Natural killer cell (primary cell): ENCODE measurements at regions of chr12 and their contacts with region 1.

Region 1: GRCh38 chr12:120437754-120438494 is at the start of gene COX6A1:
- DNase-seq: peak; percentile 83 to 100
- ATAC-seq: peak; percentile 87 to 94 (median 91)
- H3K4me3 ChIP-seq: peak within 1 kb of the TSS; percentile 73
- H3K4me3 Mint-ChIP-seq: peak within 1 kb of the TSS; percentile 98
- H3K27ac ChIP-seq: peak within 1 kb of the TSS; percentile 78
- H3K27ac Mint-ChIP-seq: peak within 1 kb of the TSS; percentile 91 to 94
- H3K4me1 ChIP-seq: peaks cover 20% of the 10 kb centered on the region
- H3K4me1 Mint-ChIP-seq: peaks cover 22 to 28% of the 10 kb centered on the region in 2 donors
- H3K27me3 ChIP-seq: no peaks in the 10 kb centered on the region
- H3K27me3 Mint-ChIP-seq: no peaks in the 10 kb centered on the region
- CTCF ChIP-seq: no peak
- total RNA-seq, gene COX6A1: 152 to 189 (median 163) TPM

Region 2: DNA sequence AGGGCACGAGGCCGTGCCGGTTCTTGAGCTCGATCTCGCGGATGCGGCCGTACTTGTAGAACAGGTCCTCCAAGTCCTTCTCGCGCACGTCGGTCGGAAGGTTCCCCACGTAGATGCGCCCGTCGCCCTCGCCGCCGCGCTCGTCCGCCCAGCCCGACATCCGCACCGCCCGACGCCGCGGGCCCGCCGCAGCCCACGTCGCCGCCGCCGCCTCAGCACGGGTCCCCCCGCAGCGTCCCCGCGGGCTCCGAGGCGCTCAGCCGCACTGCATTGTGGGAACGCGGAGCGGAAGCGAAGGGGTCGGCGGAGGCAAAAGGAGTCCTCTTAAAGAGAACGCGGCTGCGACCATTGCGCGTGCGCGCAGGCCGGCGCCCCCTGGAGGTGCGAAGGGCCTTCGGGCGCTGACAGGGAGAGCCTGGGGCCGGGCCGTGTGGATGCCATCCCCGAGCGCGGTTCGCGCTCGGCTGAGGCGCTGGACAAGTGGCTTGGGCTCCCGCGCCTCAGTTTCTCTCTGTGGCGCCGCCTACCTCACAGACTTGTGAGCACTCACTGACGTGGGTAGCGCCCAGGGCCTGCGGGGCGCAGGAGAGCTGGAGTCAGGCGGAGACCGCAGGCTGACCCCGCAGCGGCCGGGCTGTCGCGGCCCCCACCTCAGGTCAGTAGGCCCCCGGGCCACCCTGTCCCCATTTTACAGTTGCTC is 31.7 kb after region 1 on chr12 and contains the start of gene SRSF9:
- intact Hi-C with region 1: loop called (anchors 1 kb)
- DNase-seq: peak; percentile 96 to 99
- ATAC-seq: peak; percentile 83 to 95 (median 86)
- H3K4me3 ChIP-seq: peak within 1 kb of the TSS; percentile 83
- H3K4me3 Mint-ChIP-seq: peak within 1 kb of the TSS; percentile 95
- H3K27ac ChIP-seq: peak within 1 kb of the TSS; percentile 86
- H3K27ac Mint-ChIP-seq: peak within 1 kb of the TSS; percentile 91 to 97
- H3K4me1 ChIP-seq: peaks cover 44% of the 10 kb centered on the region
- H3K4me1 Mint-ChIP-seq: peaks cover 76 to 77% of the 10 kb centered on the region in 2 donors
- H3K27me3 ChIP-seq: no peaks in the 10 kb centered on the region
- H3K27me3 Mint-ChIP-seq: no peaks in the 10 kb centered on the region
- CTCF ChIP-seq: peak; percentile 93
- total RNA-seq, gene SRSF9: 175 to 191 (median 179) TPM

Region 3: DNA sequence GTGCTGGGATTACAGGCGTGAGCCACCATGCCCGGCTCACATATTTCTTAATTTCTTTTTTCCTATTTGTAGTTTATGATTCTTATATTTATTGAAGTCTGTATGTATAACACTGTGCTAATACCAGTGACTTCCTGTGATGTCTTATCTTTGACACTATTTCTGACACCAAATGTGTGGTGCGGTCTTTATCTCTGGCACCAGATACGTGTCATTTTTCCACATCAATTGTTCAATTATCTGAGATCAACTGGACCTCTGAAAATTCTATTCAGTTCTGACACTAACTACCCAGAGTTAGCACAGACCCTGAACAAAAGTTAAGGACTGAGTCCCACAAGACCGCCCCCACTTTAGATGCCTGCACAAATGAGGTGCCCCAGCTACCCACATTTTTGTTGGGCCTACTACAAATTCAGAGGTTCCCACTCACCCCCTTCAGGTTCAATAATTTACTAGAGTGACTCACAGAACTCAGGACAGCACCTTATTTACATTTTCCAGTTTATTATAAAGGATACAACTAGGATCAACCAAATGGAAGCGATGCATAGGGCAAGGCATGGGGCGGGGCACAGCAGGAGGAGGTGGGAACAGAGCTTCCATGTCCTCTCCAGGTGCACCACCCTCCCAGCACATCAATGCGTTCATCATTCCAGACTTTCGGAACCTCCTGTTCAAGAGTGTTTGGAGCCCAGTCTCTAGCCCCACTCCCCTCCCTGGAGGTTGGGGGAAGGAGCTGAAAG is 43.3 kb after region 1 on chr12:
- intact Hi-C with region 1: loop called (anchors 5 kb)
- DNase-seq: peak; percentile 27 to 67
- ATAC-seq: peak; percentile 76 to 91 (median 89)
- H3K4me3 ChIP-seq: no peak overlapping the region
- H3K4me3 Mint-ChIP-seq: peak overlapping the region; percentile 94
- H3K27ac ChIP-seq: peak overlapping the region; percentile 93
- H3K27ac Mint-ChIP-seq: peak overlapping the region; percentile 90 to 99
- H3K4me1 ChIP-seq: peaks cover 62% of the 10 kb centered on the region
- H3K4me1 Mint-ChIP-seq: peaks cover 52 to 54% of the 10 kb centered on the region in 2 donors
- H3K27me3 ChIP-seq: no peaks in the 10 kb centered on the region
- H3K27me3 Mint-ChIP-seq: no peaks in the 10 kb centered on the region
- CTCF ChIP-seq: no peak

Region 4: GRCh38 chr12:120495723-120496412 is 57.9 kb after region 1 on chr12 and contains the start of gene DYNLL1:
- intact Hi-C with region 1: loop called (anchors 1 kb)
- DNase-seq: peak; percentile 97 to 98
- ATAC-seq: peak; percentile 95 to 99 (median 96)
- H3K4me3 ChIP-seq: peak within 1 kb of the TSS; percentile 72
- H3K4me3 Mint-ChIP-seq: peak within 1 kb of the TSS; percentile 95
- H3K27ac ChIP-seq: peak within 1 kb of the TSS; percentile 70
- H3K27ac Mint-ChIP-seq: peak within 1 kb of the TSS; percentile 90
- H3K4me1 ChIP-seq: peaks cover 11% of the 10 kb centered on the region
- H3K4me1 Mint-ChIP-seq: peaks cover 44 to 46% of the 10 kb centered on the region in 2 donors
- H3K27me3 ChIP-seq: no peaks in the 10 kb centered on the region
- H3K27me3 Mint-ChIP-seq: no peaks in the 10 kb centered on the region
- CTCF ChIP-seq: no peak
- total RNA-seq, gene DYNLL1: 69.7 to 110 (median 77.2) TPM

Region 5: GRCh38 chr12:120528861-120529525 is 91.1 kb after region 1 on chr12 and contains the start of gene COQ5:
- intact Hi-C with region 1: loop called (anchors 2 kb)
- DNase-seq: peak; percentile 80 to 89
- ATAC-seq: peak; percentile 94 to 96 (median 95)
- H3K4me3 ChIP-seq: peak within 1 kb of the TSS; percentile 79
- H3K4me3 Mint-ChIP-seq: peak within 1 kb of the TSS; percentile 99
- H3K27ac ChIP-seq: peak within 1 kb of the TSS; percentile 86
- H3K27ac Mint-ChIP-seq: peak within 1 kb of the TSS; percentile 98 to 100
- H3K4me1 ChIP-seq: peaks cover 19% of the 10 kb centered on the region
- H3K4me1 Mint-ChIP-seq: peaks cover 14 to 18% of the 10 kb centered on the region in 2 donors
- H3K27me3 ChIP-seq: no peaks in the 10 kb centered on the region
- H3K27me3 Mint-ChIP-seq: no peaks in the 10 kb centered on the region
- CTCF ChIP-seq: no peak
- total RNA-seq, gene COQ5: 11.4 to 17.1 (median 14.6) TPM

Region 6: GRCh38 chr12:120649442-120650232 is 211.7 kb after region 1 on chr12:
- intact Hi-C with region 1: loop called (anchors 2 kb)
- DNase-seq: no peak
- ATAC-seq: no peak
- H3K4me3 ChIP-seq: no peak overlapping the region
- H3K4me3 Mint-ChIP-seq: no peak overlapping the region
- H3K27ac ChIP-seq: no peak overlapping the region
- H3K27ac Mint-ChIP-seq: no peak overlapping the region
- H3K4me1 ChIP-seq: peaks cover 11% of the 10 kb centered on the region
- H3K4me1 Mint-ChIP-seq: peaks cover 12 to 14% of the 10 kb centered on the region in 2 donors
- H3K27me3 ChIP-seq: peaks cover 8% of the 10 kb centered on the region
- H3K27me3 Mint-ChIP-seq: peaks cover 36% of the 10 kb centered on the region in 2 donors
- CTCF ChIP-seq: peak; percentile 27